Endothelial cell of umbilical vein (primary cell): ENCODE measurements at regions of chr10 and their contacts with region 1.

Region 1: DNA sequence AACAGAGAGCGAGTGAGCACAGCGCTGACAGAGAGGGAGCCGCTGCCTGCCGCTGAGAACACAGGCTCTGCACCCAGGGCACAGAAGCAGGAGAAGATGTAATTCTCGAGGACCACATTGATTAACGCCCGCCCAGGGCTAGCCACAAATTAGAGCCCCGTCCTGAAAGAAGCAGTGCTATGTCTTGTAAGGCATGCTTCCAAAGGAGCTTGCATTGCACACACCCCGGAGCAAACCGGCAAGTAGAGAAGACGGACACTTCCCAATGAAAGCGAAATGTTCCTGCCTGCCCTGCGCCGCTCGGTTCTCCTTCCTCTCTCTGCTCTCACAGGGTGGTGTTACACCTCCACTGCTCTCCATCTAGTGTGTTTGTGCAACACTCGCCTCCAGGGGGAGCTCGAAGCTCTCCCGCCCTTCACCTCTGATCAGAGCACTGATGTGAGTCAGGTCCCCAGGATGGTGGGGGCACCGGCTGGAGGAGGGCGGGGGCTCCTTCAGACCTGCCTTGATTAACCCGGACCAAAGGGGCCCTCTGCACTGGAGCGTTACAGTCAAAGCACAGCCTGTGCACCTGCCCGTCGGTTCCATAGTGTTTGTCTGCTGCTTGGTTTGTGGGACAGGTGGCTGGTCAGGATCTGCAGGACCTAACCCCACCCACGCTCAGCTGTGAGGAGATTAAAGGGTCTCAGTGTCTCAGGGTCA is 316.5 kb downstream of the ADARB2 start:
- DNase-seq: no peak
- H3K4me3 ChIP-seq: no peak overlapping the region
- H3K27ac ChIP-seq: no peak overlapping the region
- H3K4me1 ChIP-seq: no peaks in the 10 kb centered on the region
- H3K27me3 ChIP-seq: no peaks in the 10 kb centered on the region
- CTCF ChIP-seq: peak in 1 of 2 donors; percentile 16
- POLR2A ChIP-seq: no peak

Region 2: GRCh38 chr10:1227510-1228404 is 193.1 kb before region 1 on chr10:
- CTCF ChIA-PET with region 1: no interaction called
- POLR2A ChIA-PET with region 1: no interaction called
- dilution Hi-C with region 1: no loop called
- intact Hi-C with region 1: no loop called
- DNase-seq: no peak
- H3K4me3 ChIP-seq: no peak overlapping the region
- H3K27ac ChIP-seq: no peak overlapping the region
- H3K4me1 ChIP-seq: no peaks in the 10 kb centered on the region
- H3K27me3 ChIP-seq: no peaks in the 10 kb centered on the region
- CTCF ChIP-seq: no peak
- POLR2A ChIP-seq: no peak

Region 3: DNA sequence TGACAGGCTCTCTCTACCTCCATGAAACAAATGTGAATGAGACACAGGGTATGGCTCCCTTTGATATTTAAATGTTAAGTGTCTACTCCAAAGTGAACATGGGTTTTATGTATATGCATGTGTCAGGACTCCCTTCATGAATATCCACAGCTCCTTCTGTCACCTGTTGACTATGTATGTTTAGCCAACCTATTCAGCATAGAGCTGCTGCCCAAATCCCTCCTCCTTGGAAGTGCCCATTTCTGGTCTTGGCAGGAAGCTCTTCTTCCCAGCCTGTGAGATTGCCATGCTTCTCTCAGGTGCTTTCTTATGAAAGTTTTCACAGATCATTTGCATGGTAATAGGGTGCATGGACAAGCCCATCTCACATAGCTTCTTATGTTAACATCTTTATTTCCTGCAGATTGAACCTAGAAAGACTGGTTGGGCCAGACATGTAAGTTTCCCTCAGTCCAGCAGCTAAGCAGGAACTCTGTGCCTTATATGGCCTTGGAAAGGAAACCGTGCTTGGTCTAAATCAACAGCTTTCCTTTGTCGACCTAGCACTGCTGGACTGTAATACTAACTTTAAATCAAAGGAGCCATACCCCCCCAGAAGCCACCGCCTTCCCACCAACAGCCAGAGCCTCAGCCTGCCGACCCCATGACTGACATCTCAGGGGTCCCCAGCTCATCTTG is 27.6 kb after region 1 on chr10:
- CTCF ChIA-PET with region 1: no interaction called
- POLR2A ChIA-PET with region 1: no interaction called
- dilution Hi-C with region 1: no loop called
- intact Hi-C with region 1: no loop called
- DNase-seq: no peak
- H3K4me3 ChIP-seq: no peak overlapping the region
- H3K27ac ChIP-seq: no peak overlapping the region
- H3K4me1 ChIP-seq: no peaks in the 10 kb centered on the region
- H3K27me3 ChIP-seq: no peaks in the 10 kb centered on the region
- CTCF ChIP-seq: no peak
- POLR2A ChIP-seq: no peak

Region 4: GRCh38 chr10:1558906-1559305 is 138.1 kb after region 1 on chr10:
- CTCF ChIA-PET with region 1: no interaction called
- POLR2A ChIA-PET with region 1: no interaction called
- dilution Hi-C with region 1: no loop called
- intact Hi-C with region 1: no loop called
- DNase-seq: no peak
- H3K4me3 ChIP-seq: no peak overlapping the region
- H3K27ac ChIP-seq: no peak overlapping the region
- H3K4me1 ChIP-seq: no peaks in the 10 kb centered on the region
- H3K27me3 ChIP-seq: no peaks in the 10 kb centered on the region
- CTCF ChIP-seq: no peak
- POLR2A ChIP-seq: no peak

Region 5: DNA sequence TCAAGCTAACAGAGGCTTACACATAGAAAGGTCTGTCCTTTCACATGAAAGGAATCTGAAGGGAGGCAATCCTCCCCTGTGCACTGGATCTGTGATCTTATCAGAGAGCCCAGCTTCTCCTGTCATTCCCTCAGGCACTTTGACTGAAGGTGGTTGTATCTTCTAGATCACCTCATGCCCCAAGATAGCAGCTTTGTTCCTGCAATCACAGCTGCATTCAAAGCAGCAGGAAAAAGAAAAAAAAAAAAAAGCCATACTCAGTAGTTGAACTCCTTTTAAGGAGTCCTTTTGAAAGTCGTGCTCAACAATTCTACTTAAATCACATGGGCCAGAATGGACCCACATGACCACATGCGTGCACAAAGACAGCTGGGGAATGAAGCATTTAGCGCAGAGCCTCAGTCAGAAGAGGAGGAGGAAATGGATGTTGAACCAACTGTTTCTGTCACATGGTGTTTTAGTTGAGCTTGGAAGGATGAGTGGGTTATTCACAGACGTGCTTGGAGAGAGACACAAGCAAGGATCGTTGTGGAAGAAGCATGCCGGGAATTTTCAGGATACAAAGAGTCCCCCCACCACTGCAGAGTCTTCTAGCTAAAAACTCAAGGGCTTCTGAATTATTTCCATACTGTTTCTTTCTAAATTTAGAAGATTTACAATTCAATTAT is 1633.5 kb after region 1 on chr10:
- CTCF ChIA-PET with region 1: no interaction called
- POLR2A ChIA-PET with region 1: no interaction called
- dilution Hi-C with region 1: no loop called
- intact Hi-C with region 1: loop called (anchors 5 kb)
- DNase-seq: no peak
- H3K4me3 ChIP-seq: no peak overlapping the region
- H3K27ac ChIP-seq: no peak overlapping the region
- H3K4me1 ChIP-seq: peaks cover 14% of the 10 kb centered on the region
- H3K27me3 ChIP-seq: peaks cover 0 to 2% of the 10 kb centered on the region in 2 experiments
- CTCF ChIP-seq: no peak
- POLR2A ChIP-seq: no peak